ENCODE measurements at regions of chr10 and their contacts with region 1.

Region 1: GRCh38 chr10:79552143-79552542 is 8.1 kb downstream of the SFTPA2 start:
- DNase-seq: no peak
- H3K4me3 ChIP-seq: no peak overlapping the region
- H3K27ac ChIP-seq: no peak overlapping the region
- H3K4me1 ChIP-seq: no peaks in the 10 kb centered on the region
- H3K27me3 ChIP-seq: peaks cover 10% of the 10 kb centered on the region
- CTCF ChIP-seq: no peak

Region 2: DNA sequence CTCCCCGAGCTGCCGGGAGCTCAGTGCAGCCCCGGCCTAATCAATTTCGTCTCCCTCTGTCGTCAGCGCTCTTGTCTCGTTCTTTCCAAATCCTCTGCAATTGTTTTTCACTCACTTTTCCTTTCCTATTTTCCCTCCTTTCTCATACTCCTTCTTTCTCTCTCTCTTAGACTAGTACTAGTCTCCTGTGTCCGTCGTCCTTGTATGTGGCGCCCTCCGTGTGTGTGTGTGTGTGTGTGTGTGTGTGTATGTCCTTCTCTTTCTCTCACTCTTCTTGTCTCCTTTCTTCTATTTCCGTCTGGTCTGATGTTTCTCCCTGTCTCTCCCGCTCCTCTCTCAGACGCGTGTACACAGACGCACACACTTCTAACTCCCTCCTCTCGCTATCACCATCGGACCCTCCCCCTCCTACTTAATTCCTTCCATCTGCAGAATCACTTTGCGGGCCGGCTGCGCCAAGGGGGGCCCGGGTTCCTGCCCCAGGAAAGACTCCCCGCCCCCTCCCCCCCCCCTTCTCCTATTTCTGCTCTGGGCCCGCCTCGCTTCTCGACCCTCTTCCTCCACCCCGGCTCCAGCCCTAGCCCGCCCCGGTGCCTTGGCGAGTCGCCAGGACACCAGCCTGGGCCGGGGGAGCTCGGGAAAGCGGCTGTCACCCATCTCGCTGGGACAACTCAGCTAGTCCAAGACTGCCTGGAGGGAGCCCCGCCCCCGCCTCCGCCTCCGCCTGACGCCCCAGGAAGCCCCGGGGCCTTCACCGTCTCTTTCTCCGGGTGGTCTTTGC is 106.0 kb before region 1 on chr10:
- CTCF ChIA-PET with region 1: no interaction called
- POLR2A ChIA-PET with region 1: interaction called, 11 read pairs
- intact Hi-C with region 1: no loop called
- DNase-seq: peak; percentile 86
- H3K4me3 ChIP-seq: peak overlapping the region; percentile 64
- H3K27ac ChIP-seq: peak overlapping the region; percentile 88
- H3K4me1 ChIP-seq: peaks cover 20% of the 10 kb centered on the region
- H3K27me3 ChIP-seq: no peaks in the 10 kb centered on the region
- CTCF ChIP-seq: no peak

Region 3: GRCh38 chr10:79615577-79615976 is 63.4 kb after region 1 on chr10:
- CTCF ChIA-PET with region 1: no interaction called
- POLR2A ChIA-PET with region 1: no interaction called
- intact Hi-C with region 1: loop called (anchors 2 kb)
- DNase-seq: no peak
- H3K4me3 ChIP-seq: no peak overlapping the region
- H3K27ac ChIP-seq: no peak overlapping the region
- H3K4me1 ChIP-seq: no peaks in the 10 kb centered on the region
- H3K27me3 ChIP-seq: peaks cover 26% of the 10 kb centered on the region
- CTCF ChIP-seq: no peak

Measured in A673 (cell line).